Right ventricle myocardium inferior (tissue), 1 donor: ENCODE measurements at regions of chr5 and their contacts with region 1.

Region 1: DNA sequence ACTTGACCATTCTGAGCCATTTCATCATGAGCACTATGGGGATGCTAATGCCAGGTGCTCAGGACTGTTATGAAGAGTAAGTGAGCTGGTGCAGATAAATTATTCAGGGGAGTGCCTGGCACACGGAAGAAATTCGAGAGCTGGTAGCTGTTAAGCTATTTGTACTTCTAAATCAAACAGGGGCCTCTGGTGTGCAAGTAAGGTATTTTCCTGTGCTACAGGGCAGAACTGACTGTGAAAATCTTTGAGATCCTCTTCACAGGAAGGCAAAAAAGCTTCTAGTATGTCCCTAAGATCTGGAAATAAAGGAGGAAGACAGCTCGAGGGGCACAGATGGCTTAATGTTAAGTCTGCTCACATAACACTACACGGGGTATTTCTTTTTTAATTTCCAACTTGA is 106.3 kb upstream of the SPOCK1 start:
- DNase-seq: no peak
- ATAC-seq: no peak

Region 2: GRCh38 chr5:136814619-136815378 is 790.6 kb before region 1 on chr5:
- intact Hi-C with region 1: loop called (anchors 5 kb)
- DNase-seq: no peak
- ATAC-seq: no peak

Region 3: GRCh38 chr5:137320056-137321045 is 285.1 kb before region 1 on chr5:
- intact Hi-C with region 1: no loop called
- DNase-seq: no peak
- ATAC-seq: peak; percentile 45